RWPE1 (cell line): ENCODE measurements at regions of chr1 and their contacts with region 1.

Region 1: DNA sequence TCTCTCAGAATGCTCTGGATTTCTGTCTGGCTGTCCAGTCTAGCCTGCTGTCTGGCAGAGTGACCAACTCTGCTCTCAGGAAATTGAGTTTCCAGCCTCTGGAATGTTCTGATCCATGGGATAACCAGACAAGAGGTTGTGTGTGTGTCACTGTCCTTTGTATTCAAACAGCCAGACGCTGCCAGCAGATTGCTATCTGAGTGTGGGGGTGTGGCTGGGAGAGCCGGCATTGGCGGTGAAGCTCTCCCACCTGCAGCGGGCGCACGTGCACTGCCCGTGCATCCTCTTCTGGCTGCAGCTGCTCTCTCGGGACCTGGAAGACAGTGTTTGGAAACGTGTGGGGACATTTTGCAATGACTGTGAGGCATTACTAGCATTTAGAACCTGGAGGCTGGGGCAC is 26.1 kb downstream of the PKP1 start:
- DNase-seq: peak; percentile 83
- H3K27ac ChIP-seq: peak overlapping the region; percentile 100
- CTCF ChIP-seq: no peak; the same call in 1 of the 2 replicates

Region 2: GRCh38 chr1:201282931-201283829 is 26.2 kb before region 1 on chr1 and contains the start of gene PKP1:
- CTCF ChIA-PET with region 1: interaction called, 8 read pairs
- POLR2A ChIA-PET with region 1: interaction called, 31 read pairs
- DNase-seq: peak; percentile 90
- H3K27ac ChIP-seq: peak within 1 kb of the TSS; percentile 97
- CTCF ChIP-seq: no peak

Region 3: GRCh38 chr1:201348211-201348566 is 38.8 kb after region 1 on chr1:
- CTCF ChIA-PET with region 1: interaction called, 14 read pairs
- POLR2A ChIA-PET with region 1: interaction called, 4 read pairs
- DNase-seq: peak; percentile 91
- H3K27ac ChIP-seq: no peak overlapping the region
- CTCF ChIP-seq: peak; percentile 49

Region 4: DNA sequence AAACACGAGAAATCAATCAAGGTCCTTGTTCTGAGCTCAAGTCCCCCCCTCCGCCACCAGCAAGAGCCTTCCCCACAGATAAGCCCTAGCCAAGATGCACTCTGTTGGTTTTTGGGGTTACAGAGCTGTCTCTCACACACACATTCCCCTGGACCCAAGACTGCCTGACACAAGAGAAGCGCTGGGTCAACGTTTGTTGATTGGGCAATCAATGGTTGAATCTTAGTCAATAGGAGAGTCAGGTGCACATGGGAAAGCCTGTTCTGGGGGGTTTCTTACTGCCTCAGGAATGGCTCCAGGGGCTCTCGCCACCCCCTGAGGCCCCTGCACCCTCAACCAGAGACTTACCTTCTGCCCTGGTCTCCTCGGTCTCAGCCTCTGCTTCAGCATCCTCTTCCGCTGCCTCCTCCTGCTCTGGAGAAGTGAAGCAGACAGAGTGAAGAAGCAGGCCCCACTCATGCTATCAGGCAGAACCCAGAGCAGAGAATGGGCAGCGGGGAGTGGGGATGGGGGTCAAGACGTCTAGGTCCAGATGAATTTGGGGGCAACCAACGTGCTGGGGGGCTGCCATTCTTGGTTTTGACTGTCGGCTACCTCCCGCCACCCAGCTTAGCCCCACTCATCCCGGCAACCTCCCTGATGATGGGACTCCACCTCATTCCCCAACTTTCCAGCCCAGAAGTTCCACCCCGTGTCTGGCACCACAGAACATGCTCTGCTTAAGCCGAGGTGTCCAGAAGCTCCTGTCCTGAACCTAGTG is 58.6 kb after region 1 on chr1:
- CTCF ChIA-PET with region 1: no interaction called
- POLR2A ChIA-PET with region 1: no interaction called
- DNase-seq: no peak
- H3K27ac ChIP-seq: no peak overlapping the region
- CTCF ChIP-seq: no peak